ENCODE measurements at regions of chr5 and their contacts with region 1.

Region 1: GRCh38 chr5:131589510-131590348 is 45.3 kb downstream of the RAPGEF6 start:
- DNase-seq: peak in 6 of 9 experiments; percentile 8 to 80 (median 47)
- ATAC-seq: peak; percentile 77
- H3K4me3 ChIP-seq: no peak overlapping the region
- H3K4me3 Mint-ChIP-seq: no peak overlapping the region
- H3K27ac ChIP-seq: no peak overlapping the region
- H3K27ac Mint-ChIP-seq: no peak overlapping the region
- H3K4me1 ChIP-seq: peaks cover 13% of the 10 kb centered on the region
- H3K4me1 Mint-ChIP-seq: peaks cover 50% of the 10 kb centered on the region
- H3K27me3 ChIP-seq: no peaks in the 10 kb centered on the region
- H3K27me3 Mint-ChIP-seq: no peaks in the 10 kb centered on the region
- CTCF ChIP-seq: peak; percentile 89

Region 2: GRCh38 chr5:130642461-130642860 is 947.3 kb before region 1 on chr5:
- CTCF ChIA-PET with region 1: no interaction called
- POLR2A ChIA-PET with region 1: no interaction called
- intact Hi-C with region 1: no loop called
- DNase-seq: no peak
- ATAC-seq: no peak
- H3K4me3 ChIP-seq: no peak overlapping the region
- H3K4me3 Mint-ChIP-seq: no peak overlapping the region
- H3K27ac ChIP-seq: no peak overlapping the region
- H3K27ac Mint-ChIP-seq: no peak overlapping the region
- H3K4me1 ChIP-seq: no peaks in the 10 kb centered on the region
- H3K4me1 Mint-ChIP-seq: no peaks in the 10 kb centered on the region
- H3K27me3 ChIP-seq: no peaks in the 10 kb centered on the region
- H3K27me3 Mint-ChIP-seq: no peaks in the 10 kb centered on the region
- CTCF ChIP-seq: no peak

Region 3: GRCh38 chr5:130885027-130885426 is 704.7 kb before region 1 on chr5:
- CTCF ChIA-PET with region 1: no interaction called
- POLR2A ChIA-PET with region 1: no interaction called
- intact Hi-C with region 1: no loop called
- DNase-seq: no peak
- ATAC-seq: no peak
- H3K4me3 ChIP-seq: no peak overlapping the region
- H3K4me3 Mint-ChIP-seq: no peak overlapping the region
- H3K27ac ChIP-seq: no peak overlapping the region
- H3K27ac Mint-ChIP-seq: no peak overlapping the region
- H3K4me1 ChIP-seq: no peaks in the 10 kb centered on the region
- H3K4me1 Mint-ChIP-seq: peaks cover 8% of the 10 kb centered on the region
- H3K27me3 ChIP-seq: no peaks in the 10 kb centered on the region
- H3K27me3 Mint-ChIP-seq: peaks cover 11% of the 10 kb centered on the region
- CTCF ChIP-seq: no peak

Region 4: DNA sequence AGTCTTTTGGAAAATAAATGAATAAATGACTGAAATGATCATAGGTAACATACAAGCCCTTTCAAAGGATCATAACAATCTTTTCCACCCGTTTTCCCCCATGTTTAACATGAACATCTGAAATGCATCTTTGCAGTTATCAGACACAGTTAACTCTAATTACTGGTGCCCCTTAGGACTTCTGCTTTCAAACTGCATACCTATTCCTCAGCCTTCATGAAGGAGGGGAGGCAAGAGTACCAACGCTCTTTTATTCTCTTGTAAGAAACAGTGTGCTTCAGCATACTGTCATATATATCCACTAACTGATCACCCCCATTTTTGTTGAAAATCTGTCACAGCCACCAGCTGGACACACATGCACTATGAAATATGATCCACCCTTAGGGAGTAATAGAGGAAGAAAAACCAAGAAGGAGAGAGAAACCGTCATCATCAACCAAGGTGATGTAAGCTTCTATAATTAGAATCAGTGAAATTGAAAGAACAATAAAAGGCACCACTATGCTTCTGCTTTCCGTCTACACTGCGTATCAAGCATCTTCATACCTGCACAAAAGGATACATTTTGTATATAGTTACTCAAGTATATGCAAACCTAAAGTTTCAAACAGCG is 53.4 kb before region 1 on chr5:
- CTCF ChIA-PET with region 1: interaction called, 16 read pairs
- POLR2A ChIA-PET with region 1: no interaction called
- intact Hi-C with region 1: no loop called
- DNase-seq: peak in 2 of 9 experiments; percentile 32 to 63
- ATAC-seq: peak; percentile 56
- H3K4me3 ChIP-seq: no peak overlapping the region
- H3K4me3 Mint-ChIP-seq: peak overlapping the region; percentile 66
- H3K27ac ChIP-seq: peak overlapping the region; percentile 1 to 41
- H3K27ac Mint-ChIP-seq: peak overlapping the region; percentile 93
- H3K4me1 ChIP-seq: peaks cover 88% of the 10 kb centered on the region
- H3K4me1 Mint-ChIP-seq: peaks cover 82% of the 10 kb centered on the region
- H3K27me3 ChIP-seq: no peaks in the 10 kb centered on the region
- H3K27me3 Mint-ChIP-seq: no peaks in the 10 kb centered on the region
- CTCF ChIP-seq: no peak

Region 5: GRCh38 chr5:131615957-131616356 is 26.2 kb after region 1 on chr5:
- CTCF ChIA-PET with region 1: interaction called, 12 read pairs
- POLR2A ChIA-PET with region 1: no interaction called
- intact Hi-C with region 1: no loop called
- DNase-seq: no peak
- ATAC-seq: no peak
- H3K4me3 ChIP-seq: no peak overlapping the region
- H3K4me3 Mint-ChIP-seq: no peak overlapping the region
- H3K27ac ChIP-seq: no peak overlapping the region
- H3K27ac Mint-ChIP-seq: no peak overlapping the region
- H3K4me1 ChIP-seq: peaks cover 18% of the 10 kb centered on the region
- H3K4me1 Mint-ChIP-seq: peaks cover 68% of the 10 kb centered on the region
- H3K27me3 ChIP-seq: no peaks in the 10 kb centered on the region
- H3K27me3 Mint-ChIP-seq: no peaks in the 10 kb centered on the region
- CTCF ChIP-seq: no peak

Region 6: GRCh38 chr5:131747180-131748105 is 157.7 kb after region 1 on chr5:
- CTCF ChIA-PET with region 1: interaction called, 4 read pairs
- POLR2A ChIA-PET with region 1: no interaction called
- intact Hi-C with region 1: loop called in 1 of 2 experiments (anchors 5 kb)
- DNase-seq: peak in 2 of 9 experiments; percentile 9 to 44
- ATAC-seq: peak; percentile 81
- H3K4me3 ChIP-seq: no peak overlapping the region
- H3K4me3 Mint-ChIP-seq: peak overlapping the region; percentile 47
- H3K27ac ChIP-seq: peak overlapping the region; percentile 20 to 44
- H3K27ac Mint-ChIP-seq: peak overlapping the region; percentile 89
- H3K4me1 ChIP-seq: peaks cover 17% of the 10 kb centered on the region
- H3K4me1 Mint-ChIP-seq: peaks cover 43% of the 10 kb centered on the region
- H3K27me3 ChIP-seq: no peaks in the 10 kb centered on the region
- H3K27me3 Mint-ChIP-seq: no peaks in the 10 kb centered on the region
- CTCF ChIP-seq: no peak

Region 7: GRCh38 chr5:132007399-132008165 is 417.9 kb after region 1 on chr5:
- CTCF ChIA-PET with region 1: interaction called, 267 read pairs
- POLR2A ChIA-PET with region 1: interaction called, 10 read pairs
- intact Hi-C with region 1: loop called (anchors 1 kb)
- DNase-seq: peak; percentile 51 to 84 (median 79)
- ATAC-seq: peak; percentile 47
- H3K4me3 ChIP-seq: no peak overlapping the region
- H3K4me3 Mint-ChIP-seq: no peak overlapping the region
- H3K27ac ChIP-seq: no peak overlapping the region
- H3K27ac Mint-ChIP-seq: no peak overlapping the region
- H3K4me1 ChIP-seq: peaks cover 11% of the 10 kb centered on the region
- H3K4me1 Mint-ChIP-seq: peaks cover 23% of the 10 kb centered on the region
- H3K27me3 ChIP-seq: peaks cover 0 to 9% of the 10 kb centered on the region in 2 experiments
- H3K27me3 Mint-ChIP-seq: peaks cover 13% of the 10 kb centered on the region
- CTCF ChIP-seq: peak; percentile 67

Region 8: DNA sequence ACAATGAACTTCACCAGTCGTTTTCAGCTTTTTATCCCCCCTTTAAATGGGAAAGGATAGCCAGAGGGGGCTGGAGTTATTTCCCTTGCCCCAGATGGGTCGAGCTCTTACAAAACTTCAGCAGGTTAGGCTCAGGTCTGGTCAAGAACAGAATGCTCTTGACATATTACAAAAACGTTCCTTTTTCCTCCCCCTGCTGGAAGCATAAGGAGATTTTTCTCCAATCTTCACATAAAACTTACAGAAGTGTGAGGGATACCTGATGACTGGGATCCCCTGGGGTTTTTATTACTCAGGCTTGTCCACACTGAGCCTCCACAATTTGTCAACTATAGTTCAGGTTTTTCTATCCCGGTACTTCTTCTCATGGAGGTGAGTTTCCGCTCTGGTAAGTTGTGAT is 544.7 kb after region 1 on chr5:
- CTCF ChIA-PET with region 1: no interaction called
- POLR2A ChIA-PET with region 1: no interaction called
- intact Hi-C with region 1: loop called in 1 of 2 experiments (anchors 10 kb)
- DNase-seq: peak in 2 of 9 experiments; percentile 37 to 56
- ATAC-seq: no peak
- H3K4me3 ChIP-seq: no peak overlapping the region
- H3K4me3 Mint-ChIP-seq: no peak overlapping the region
- H3K27ac ChIP-seq: no peak overlapping the region
- H3K27ac Mint-ChIP-seq: no peak overlapping the region
- H3K4me1 ChIP-seq: no peaks in the 10 kb centered on the region
- H3K4me1 Mint-ChIP-seq: no peaks in the 10 kb centered on the region
- H3K27me3 ChIP-seq: no peaks in the 10 kb centered on the region
- H3K27me3 Mint-ChIP-seq: peaks cover 7% of the 10 kb centered on the region
- CTCF ChIP-seq: no peak